ENCODE measurements at regions of chr2 and their contacts with region 1.

Region 1: DNA sequence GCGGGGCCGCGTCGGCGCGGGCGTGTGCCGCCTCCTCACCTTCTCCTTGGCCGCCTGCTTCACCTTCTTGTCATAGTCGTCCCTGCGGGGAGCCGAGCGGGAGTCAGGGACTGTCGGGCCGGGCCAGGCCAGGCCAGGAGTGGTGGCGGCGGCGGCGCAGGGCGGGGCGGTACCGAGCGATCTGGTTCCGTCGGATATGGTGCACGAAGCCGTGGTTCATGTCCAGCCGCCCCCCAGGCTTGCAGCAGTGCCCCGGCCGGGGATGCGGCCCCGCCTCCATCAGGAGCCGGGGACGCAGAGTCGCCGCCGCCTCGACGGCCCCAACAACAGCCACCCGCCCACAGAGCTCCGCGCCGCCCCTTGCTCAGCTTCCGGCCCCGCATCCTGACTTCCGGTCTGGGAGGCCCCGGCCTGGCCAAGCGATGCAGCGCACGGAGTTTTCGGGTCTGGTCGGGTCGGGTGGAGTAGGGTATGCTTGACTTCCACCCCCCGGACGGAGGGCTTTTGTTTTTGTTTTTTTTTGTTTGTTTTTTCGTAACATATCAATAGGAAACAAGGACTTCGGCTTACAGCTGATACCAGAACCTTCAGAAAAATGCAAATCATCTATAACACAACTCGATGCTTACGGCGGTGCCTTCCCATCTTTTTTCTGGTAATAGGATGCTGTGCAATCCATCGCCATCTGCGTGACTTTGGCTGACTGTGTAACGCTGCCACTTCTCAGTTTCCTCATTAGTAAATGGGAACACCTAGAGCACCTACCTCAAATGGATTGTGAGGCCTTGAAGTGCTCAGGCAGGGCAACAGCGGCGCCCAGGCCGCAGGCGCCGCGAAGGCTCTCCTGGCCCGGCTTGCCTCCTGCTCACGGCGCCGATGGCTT is at the start of gene C2orf68:
- DNase-seq: peak; percentile 77 to 88
- H3K4me3 ChIP-seq: peak within 1 kb of the TSS; percentile 75
- H3K27ac ChIP-seq: peak within 1 kb of the TSS; percentile 76
- H3K4me1 ChIP-seq: peaks cover 37% of the 10 kb centered on the region
- H3K27me3 ChIP-seq: no peaks in the 10 kb centered on the region
- CTCF ChIP-seq: no peak
- total RNA-seq, gene C2orf68: 46.0 and 48.6 TPM in 2 replicates

Region 2: DNA sequence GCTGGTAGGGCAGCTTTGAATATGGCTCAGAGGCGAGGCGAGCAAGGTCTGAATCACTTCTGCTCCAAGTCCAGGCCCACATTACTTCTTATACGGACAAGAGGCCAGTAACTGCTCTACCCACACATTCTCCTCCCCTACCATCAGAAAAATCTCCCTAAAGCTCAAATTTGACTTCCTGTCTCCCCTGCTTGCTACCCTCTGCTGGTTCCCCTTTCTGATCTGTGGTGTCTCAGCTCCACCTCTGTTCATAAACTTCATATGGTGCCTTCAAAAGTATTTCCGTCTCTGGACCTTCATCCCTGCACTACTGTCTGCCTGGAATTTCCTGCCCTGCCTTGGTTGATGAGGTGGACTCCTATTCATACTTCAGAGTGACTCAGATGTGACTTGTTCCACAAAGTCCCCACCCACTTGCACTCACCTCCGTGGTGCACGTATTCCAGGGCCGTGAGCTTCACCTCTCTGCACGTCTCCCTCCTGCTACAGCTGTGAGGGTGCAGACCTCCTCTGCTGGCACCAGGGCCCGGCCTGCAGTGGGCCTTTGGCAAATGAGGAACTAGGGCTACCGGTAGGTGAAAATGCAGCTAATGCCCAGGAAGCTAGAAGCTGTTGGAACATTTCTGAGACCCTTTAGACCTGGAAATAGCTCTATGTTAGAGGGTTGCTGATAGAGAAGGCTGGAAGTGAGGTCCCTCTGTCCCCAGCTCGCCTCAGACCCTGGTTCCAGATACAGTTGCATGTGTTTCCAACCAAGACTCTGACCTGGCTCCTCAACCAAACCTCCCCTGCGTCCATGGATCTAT is 665.5 kb before region 1 on chr2:
- CTCF ChIA-PET with region 1: no interaction called
- POLR2A ChIA-PET with region 1: interaction called, 17 read pairs
- intact Hi-C with region 1: no loop called
- DNase-seq: peak; percentile 84 to 98
- H3K4me3 ChIP-seq: peak overlapping the region; percentile 27; the same call in 1 of the 2 replicates
- H3K27ac ChIP-seq: peak overlapping the region; percentile 94
- H3K4me1 ChIP-seq: peaks cover 52% of the 10 kb centered on the region
- H3K27me3 ChIP-seq: no peaks in the 10 kb centered on the region
- CTCF ChIP-seq: no peak

Region 3: DNA sequence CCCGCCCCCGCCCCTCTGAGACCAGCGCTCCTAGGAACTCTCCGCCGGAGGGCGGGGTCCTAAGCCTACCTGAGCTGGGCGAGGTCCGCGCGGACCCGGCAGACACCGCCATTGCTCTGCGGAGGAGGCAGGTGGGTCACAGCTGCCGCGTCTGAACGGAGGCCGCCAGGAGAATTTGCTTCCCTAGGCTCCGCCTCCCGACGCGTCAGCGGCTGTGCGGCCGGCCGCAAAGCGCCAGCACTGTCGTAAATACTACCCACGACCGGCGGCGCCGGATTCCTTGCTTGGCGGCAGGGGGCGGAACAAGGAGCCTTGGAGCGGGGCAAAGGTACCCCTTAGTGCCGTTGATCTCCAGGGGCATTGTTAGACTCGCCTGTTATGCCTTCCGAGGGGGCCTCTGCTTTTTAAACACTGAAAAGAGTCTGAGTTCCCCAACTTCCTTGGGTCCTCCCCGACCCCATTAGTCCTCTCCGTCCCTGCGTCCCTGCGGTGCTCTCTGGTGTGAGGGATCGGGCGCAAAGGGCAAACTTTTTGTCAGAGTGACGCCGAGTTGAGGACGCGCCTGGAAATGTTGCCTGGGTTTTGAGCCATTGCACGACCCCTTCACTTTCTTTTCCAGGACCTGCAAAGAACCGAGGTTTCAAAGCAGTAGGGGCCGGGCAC is 50.5 kb before region 1 on chr2 and contains the start of gene GGCX:
- CTCF ChIA-PET with region 1: no interaction called
- POLR2A ChIA-PET with region 1: no interaction called
- intact Hi-C with region 1: loop called (anchors 1 kb)
- DNase-seq: peak; percentile 86 to 89
- H3K4me3 ChIP-seq: peak within 1 kb of the TSS; percentile 73
- H3K27ac ChIP-seq: peak within 1 kb of the TSS; percentile 65
- H3K4me1 ChIP-seq: peaks cover 15% of the 10 kb centered on the region
- H3K27me3 ChIP-seq: no peaks in the 10 kb centered on the region
- CTCF ChIP-seq: peak; percentile 49; the same call in 1 of the 2 replicates
- total RNA-seq, gene GGCX: 30.2 and 30.6 TPM in 2 replicates

Region 4: DNA sequence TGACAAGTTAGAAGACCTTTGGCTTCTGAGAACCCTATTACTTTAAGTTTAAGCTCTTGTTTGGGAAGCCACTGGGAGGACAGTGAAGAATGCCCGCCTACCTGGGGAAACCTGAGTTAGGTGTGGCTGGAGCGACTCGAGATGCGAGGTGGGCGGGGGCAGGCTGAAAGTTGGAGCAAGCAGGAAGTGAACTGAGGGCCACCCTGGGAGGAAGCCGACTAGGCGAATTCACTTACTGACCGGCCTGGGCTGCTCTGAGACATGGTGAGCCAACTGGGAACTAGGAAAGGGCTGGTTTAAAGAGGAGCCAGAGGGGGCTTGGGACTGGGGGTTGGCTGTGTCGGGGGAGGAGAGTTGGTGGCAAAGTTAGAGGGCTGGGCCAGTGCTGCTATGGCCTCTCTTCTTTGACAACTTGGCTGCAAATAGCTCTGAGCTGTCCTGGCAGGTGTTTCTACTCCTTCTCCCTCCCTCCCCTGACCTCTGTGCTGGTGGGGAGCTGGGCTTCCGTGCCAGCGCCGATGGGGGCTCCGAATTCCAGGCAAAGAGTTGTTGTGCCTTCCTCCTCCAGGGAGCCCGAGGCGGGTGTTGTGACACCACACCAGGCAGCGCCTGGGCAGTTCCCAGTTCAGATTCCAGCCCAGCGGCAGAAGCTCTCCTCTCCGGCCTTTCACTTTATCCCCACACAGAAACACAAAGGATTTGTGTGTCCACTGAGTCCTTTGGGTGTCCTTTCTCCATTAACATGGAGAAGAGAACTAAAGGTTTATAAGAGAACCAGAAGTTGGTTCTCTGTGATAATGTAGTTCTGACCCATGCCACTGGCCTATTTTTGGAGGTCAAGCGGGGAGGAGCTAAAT is 34.3 kb before region 1 on chr2 and contains the start of gene VAMP8:
- CTCF ChIA-PET with region 1: no interaction called
- POLR2A ChIA-PET with region 1: interaction called, 20 read pairs
- intact Hi-C with region 1: no loop called
- DNase-seq: peak; percentile 79 to 83
- H3K4me3 ChIP-seq: peak within 1 kb of the TSS; percentile 60
- H3K27ac ChIP-seq: peak within 1 kb of the TSS; percentile 64
- H3K4me1 ChIP-seq: peaks cover 22% of the 10 kb centered on the region
- H3K27me3 ChIP-seq: no peaks in the 10 kb centered on the region
- CTCF ChIP-seq: no peak
- total RNA-seq, gene VAMP8: 91.9 and 124 TPM in 2 replicates

Region 5: DNA sequence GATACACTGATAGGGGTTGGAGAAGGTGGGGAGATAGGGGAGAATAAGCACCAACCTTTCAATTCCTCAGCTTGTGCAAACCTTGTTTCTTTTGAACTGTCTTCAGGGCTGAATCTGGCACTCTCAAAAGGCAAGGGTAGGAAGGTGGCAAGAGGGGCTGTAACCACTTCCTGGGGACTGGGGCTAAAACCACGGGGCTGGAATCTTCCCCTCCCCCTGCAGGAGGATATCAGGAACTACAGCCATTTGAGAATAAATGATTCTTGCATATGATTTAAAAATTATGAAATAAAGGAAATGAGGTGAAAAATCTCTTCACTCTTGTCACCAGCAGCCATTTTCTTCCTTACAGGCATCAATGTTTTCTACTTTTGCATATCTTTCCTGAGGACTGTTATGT is 192.6 kb after region 1 on chr2:
- CTCF ChIA-PET with region 1: interaction called, 11 read pairs
- POLR2A ChIA-PET with region 1: no interaction called
- intact Hi-C with region 1: no loop called
- DNase-seq: no peak
- H3K4me3 ChIP-seq: no peak overlapping the region
- H3K27ac ChIP-seq: no peak overlapping the region
- H3K4me1 ChIP-seq: peaks cover 6% of the 10 kb centered on the region
- H3K27me3 ChIP-seq: no peaks in the 10 kb centered on the region
- CTCF ChIP-seq: peak; percentile 78

Measured in PC-9 (cell line).